ENCODE measurements at regions of chr16 and their contacts with region 1.

Region 1: GRCh38 chr16:30378236-30379204 is 3.8 kb downstream of the SEPTIN1 start:
- DNase-seq: peak; percentile 96 to 98 (median 97)
- H3K4me3 ChIP-seq: peak overlapping the region; percentile 64 to 77 (median 74)
- H3K4me3 Mint-ChIP-seq: peak overlapping the region; percentile 91 to 95
- H3K27ac ChIP-seq: peak overlapping the region; percentile 100
- H3K27ac Mint-ChIP-seq: peak overlapping the region; percentile 99 to 100 (median 100)
- H3K4me1 ChIP-seq: peaks cover 30 to 42% of the 10 kb centered on the region in 2 donors
- H3K4me1 Mint-ChIP-seq: peaks cover 29% of the 10 kb centered on the region
- H3K27me3 ChIP-seq: peaks cover 0 to 3% of the 10 kb centered on the region in 2 donors
- H3K27me3 Mint-ChIP-seq: peaks cover 4 to 9% (median 8%) of the 10 kb centered on the region in 3 donors
- CTCF ChIP-seq: no peak

Region 2: DNA sequence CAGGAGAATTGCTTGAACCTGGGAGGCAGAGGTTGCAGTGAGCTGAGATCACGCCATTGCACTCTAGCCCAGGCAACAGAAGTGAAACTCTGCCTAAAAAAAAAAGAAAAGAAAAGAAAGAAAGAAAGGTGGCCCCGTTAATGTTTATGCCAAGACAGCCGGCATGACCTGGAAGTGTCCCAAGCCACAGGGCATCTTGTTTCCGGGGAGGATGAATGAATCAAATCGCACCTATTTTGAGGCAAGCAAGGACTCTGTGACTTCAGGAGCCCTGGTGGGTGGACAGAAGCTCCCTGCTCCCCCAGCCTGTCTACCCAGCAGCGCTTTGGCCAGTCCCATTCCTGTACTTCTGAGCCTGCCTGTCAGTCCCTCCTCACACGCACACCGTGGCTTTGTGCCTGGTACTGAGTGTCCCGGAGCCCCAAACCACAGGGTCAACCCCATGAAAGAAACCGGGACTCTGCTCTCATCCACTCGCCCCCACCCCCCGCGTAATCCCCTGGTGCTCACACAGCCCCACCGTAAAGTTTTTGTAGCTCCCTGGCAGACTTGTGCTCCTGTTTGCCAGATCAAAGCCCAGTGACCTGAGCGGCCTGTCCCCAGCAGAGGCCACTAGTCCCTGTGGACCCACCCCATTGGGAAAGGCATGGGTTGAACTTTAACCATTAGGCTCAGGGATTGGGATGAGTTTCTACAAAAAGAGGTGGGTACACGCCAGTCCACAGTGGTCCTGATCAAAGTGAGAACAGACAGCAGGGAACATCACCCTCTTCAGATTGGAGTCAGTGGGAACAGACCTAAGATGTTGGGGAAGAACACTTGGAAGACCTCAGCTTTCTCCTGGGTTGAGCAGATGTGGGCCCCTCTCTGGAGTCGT is 42.7 kb before region 1 on chr16:
- intact Hi-C with region 1: loop called in 1 of 2 experiments (anchors 2 kb)
- DNase-seq: peak in 2 of 3 donors; percentile 9 to 20
- H3K4me3 ChIP-seq: peak overlapping the region; percentile 55 to 80 (median 77)
- H3K4me3 Mint-ChIP-seq: peak overlapping the region; percentile 85 to 93
- H3K27ac ChIP-seq: peak overlapping the region; percentile 67 to 68
- H3K27ac Mint-ChIP-seq: peak overlapping the region; percentile 81 to 92 (median 87)
- H3K4me1 ChIP-seq: peaks cover 11% of the 10 kb centered on the region in 2 donors
- H3K4me1 Mint-ChIP-seq: peaks cover 22% of the 10 kb centered on the region
- H3K27me3 ChIP-seq: no peaks in the 10 kb centered on the region
- H3K27me3 Mint-ChIP-seq: peaks cover 0 to 2% (median 1%) of the 10 kb centered on the region in 3 donors
- CTCF ChIP-seq: no peak

Region 3: DNA sequence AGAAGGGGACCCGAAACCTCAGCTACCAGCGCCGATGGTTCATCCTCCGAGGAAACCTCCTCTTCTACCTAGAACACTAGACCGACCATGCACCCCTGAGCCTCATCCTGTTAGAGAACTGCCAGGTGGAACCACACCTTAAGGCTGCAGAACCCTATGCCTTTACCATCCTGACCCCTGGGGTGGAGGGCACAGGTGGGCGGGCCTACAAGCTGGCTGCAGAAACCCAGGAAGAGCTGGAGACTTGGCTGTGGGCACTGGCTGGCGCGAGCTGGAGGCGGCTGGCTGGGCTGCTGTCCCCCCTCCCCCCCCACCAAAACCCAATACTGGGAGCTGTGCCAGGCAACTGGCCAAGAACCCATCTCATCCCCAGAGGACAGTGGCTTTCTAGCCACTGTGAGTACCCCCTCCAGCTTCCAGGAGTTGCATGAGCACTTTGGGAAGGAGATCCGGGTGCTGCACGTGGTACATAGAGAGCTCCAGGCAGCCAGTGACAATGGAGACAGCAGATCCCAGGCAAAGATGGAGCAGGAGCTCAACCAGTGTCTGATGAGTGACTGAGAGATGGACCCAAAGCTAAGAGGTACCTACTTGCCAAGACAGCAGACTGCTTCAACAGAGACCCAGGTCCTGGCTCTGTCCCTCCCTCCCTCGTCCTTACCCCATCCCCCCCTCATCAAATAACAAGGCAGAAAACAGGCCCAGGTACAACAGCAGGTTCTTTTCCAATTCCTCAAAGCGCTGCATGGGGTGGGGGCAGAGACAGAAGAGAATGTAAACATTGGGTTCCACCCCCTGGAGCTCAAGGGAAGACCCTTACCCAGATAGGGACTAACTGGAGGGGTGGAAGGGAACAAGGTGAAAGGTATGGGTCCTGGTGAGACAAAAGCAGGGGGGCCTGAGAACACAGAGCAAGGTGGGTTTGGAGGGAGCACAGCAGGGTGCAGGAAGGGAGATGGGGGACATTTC is 21.8 kb before region 1 on chr16:
- intact Hi-C with region 1: no loop called
- DNase-seq: peak in 1 of 3 donors; percentile 5
- H3K4me3 ChIP-seq: peak overlapping the region in 2 of 3 experiments; percentile 96 to 100
- H3K4me3 Mint-ChIP-seq: peak overlapping the region; percentile 97 to 99
- H3K27ac ChIP-seq: peak overlapping the region; percentile 94 to 99
- H3K27ac Mint-ChIP-seq: peak overlapping the region; percentile 88 to 100 (median 98)
- H3K4me1 ChIP-seq: peaks cover 26 to 36% of the 10 kb centered on the region in 2 donors
- H3K4me1 Mint-ChIP-seq: peaks cover 32% of the 10 kb centered on the region
- H3K27me3 ChIP-seq: no peaks in the 10 kb centered on the region
- H3K27me3 Mint-ChIP-seq: peaks cover 0 to 1% (median 0%) of the 10 kb centered on the region in 3 donors
- CTCF ChIP-seq: no peak

Region 4: GRCh38 chr16:30395155-30395991 is 16.9 kb after region 1 on chr16 and contains the start of gene ZNF48:
- intact Hi-C with region 1: loop called in 1 of 2 experiments (anchors 2 kb)
- DNase-seq: peak; percentile 46 to 51 (median 48)
- H3K4me3 ChIP-seq: peak within 1 kb of the TSS; percentile 42 to 80 (median 46)
- H3K4me3 Mint-ChIP-seq: peak within 1 kb of the TSS; percentile 84 to 91
- H3K27ac ChIP-seq: no peak within 1 kb of the TSS
- H3K27ac Mint-ChIP-seq: peak within 1 kb of the TSS in 3 of 7 donors; percentile 20 to 68 (median 33)
- H3K4me1 ChIP-seq: peaks cover 15 to 23% of the 10 kb centered on the region in 2 donors
- H3K4me1 Mint-ChIP-seq: peaks cover 28% of the 10 kb centered on the region
- H3K27me3 ChIP-seq: no peaks in the 10 kb centered on the region
- H3K27me3 Mint-ChIP-seq: peaks cover 7 to 34% (median 12%) of the 10 kb centered on the region in 3 donors
- CTCF ChIP-seq: peak; percentile 73
- polyA plus RNA-seq, gene ZNF48: 0.67 to 1.4 (median 0.93) TPM

Region 5: DNA sequence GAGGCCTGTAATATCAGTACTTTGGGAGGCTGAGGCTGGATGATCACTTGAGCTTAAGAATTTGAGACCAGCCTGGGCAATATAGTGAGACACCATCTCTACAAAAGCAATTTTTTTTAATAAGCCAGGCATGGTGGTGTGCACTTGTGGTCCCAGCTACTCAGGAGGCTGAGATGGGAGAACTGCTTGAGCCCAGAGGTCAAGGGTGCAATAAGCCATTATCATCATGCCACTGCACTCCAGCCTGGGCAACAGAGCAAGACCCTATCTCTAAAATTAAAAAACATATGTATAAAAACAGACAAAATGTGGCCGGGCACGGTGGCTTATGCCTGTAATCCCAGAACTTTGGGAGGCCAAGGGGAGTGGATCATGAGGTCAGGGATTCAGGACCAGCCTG is 210.1 kb after region 1 on chr16:
- intact Hi-C with region 1: no loop called
- DNase-seq: no peak
- H3K4me3 ChIP-seq: no peak overlapping the region
- H3K4me3 Mint-ChIP-seq: no peak overlapping the region
- H3K27ac ChIP-seq: no peak overlapping the region
- H3K27ac Mint-ChIP-seq: peak overlapping the region in 1 of 7 donors; percentile 38
- H3K4me1 ChIP-seq: peaks cover 14 to 18% of the 10 kb centered on the region in 2 donors
- H3K4me1 Mint-ChIP-seq: peaks cover 20% of the 10 kb centered on the region
- H3K27me3 ChIP-seq: no peaks in the 10 kb centered on the region
- H3K27me3 Mint-ChIP-seq: no peaks in the 10 kb centered on the region
- CTCF ChIP-seq: no peak